BJ (cell line): ENCODE measurements at regions of chr16 and their contacts with region 1.

Region 1: DNA sequence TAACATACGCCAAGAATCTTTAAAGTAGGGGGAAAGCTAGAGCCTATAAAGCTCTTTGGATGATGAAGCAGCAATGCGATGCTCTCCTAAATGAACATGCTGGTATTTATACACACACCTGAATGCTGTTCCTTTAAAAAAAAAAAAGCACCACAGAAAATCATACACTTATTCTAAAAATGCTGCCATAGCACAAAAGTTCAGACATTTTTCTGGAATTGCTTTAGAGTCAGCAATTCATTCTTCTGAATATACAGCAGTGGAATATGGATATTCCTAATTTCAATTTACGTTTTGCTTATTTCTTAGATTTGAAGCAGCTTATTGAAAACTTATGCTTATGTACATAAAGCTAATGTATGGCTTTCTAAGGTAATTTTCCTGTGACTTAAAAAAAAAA is 3.1 kb downstream of the CSNK2A2 start:
- DNase-seq: no peak
- H3K4me3 ChIP-seq: no peak overlapping the region
- H3K27me3 ChIP-seq: no peaks in the 10 kb centered on the region; the same call in 1 of the 2 replicates
- CTCF ChIP-seq: no peak

Region 2: GRCh38 chr16:59330019-59330670 is 1135.4 kb after region 1 on chr16:
- CTCF ChIA-PET with region 1: no interaction called
- POLR2A ChIA-PET with region 1: interaction called, 10 read pairs
- DNase-seq: peak; percentile 1
- H3K4me3 ChIP-seq: no peak overlapping the region
- H3K27me3 ChIP-seq: no peaks in the 10 kb centered on the region
- CTCF ChIP-seq: no peak